ENCODE measurements at regions of chr9 and their contacts with region 1.

Region 1: GRCh38 chr9:109119439-109120203 is at the start of gene TMEM245:
- DNase-seq: peak; percentile 99
- ATAC-seq: peak; percentile 94
- H3K4me3 ChIP-seq: peak within 1 kb of the TSS; percentile 70 to 93
- H3K27ac ChIP-seq: peak within 1 kb of the TSS; percentile 87
- H3K4me1 ChIP-seq: peaks cover 15 to 31% of the 10 kb centered on the region in 2 experiments
- H3K27me3 ChIP-seq: no peaks in the 10 kb centered on the region
- CTCF ChIP-seq: no peak
- POLR2A ChIP-seq: peak; percentile 56
- RAD21 ChIP-seq: no peak
- total RNA-seq, gene TMEM245: 34.8 TPM

Region 2: GRCh38 chr9:109035684-109036423 is 83.8 kb before region 1 on chr9:
- CTCF ChIA-PET with region 1: no interaction called
- POLR2A ChIA-PET with region 1: no interaction called
- RAD21 ChIA-PET with region 1: no interaction called
- intact Hi-C with region 1: loop called (anchors 1 kb)
- DNase-seq: peak; percentile 74
- ATAC-seq: peak; percentile 91
- H3K4me3 ChIP-seq: peak overlapping the region in 1 of 2 experiments; percentile 14; a peak in 1 of 4 replicates
- H3K27ac ChIP-seq: peak overlapping the region; percentile 67
- H3K4me1 ChIP-seq: peaks cover 53 to 59% of the 10 kb centered on the region in 2 experiments
- H3K27me3 ChIP-seq: no peaks in the 10 kb centered on the region
- CTCF ChIP-seq: no peak
- POLR2A ChIP-seq: no peak
- RAD21 ChIP-seq: peak; percentile 1; the same call in 1 of the 2 replicates

Region 3: GRCh38 chr9:109385499-109385898 is 265.9 kb after region 1 on chr9:
- CTCF ChIA-PET with region 1: no interaction called
- POLR2A ChIA-PET with region 1: no interaction called
- RAD21 ChIA-PET with region 1: no interaction called
- intact Hi-C with region 1: no loop called
- DNase-seq: no peak
- ATAC-seq: no peak
- H3K4me3 ChIP-seq: no peak overlapping the region
- H3K27ac ChIP-seq: no peak overlapping the region
- H3K4me1 ChIP-seq: no peaks in the 10 kb centered on the region
- H3K27me3 ChIP-seq: no peaks in the 10 kb centered on the region
- CTCF ChIP-seq: no peak
- POLR2A ChIP-seq: no peak
- RAD21 ChIP-seq: no peak